GM12878 (cell line): ENCODE measurements at regions of chrX and their contacts with region 1.

Region 1: DNA sequence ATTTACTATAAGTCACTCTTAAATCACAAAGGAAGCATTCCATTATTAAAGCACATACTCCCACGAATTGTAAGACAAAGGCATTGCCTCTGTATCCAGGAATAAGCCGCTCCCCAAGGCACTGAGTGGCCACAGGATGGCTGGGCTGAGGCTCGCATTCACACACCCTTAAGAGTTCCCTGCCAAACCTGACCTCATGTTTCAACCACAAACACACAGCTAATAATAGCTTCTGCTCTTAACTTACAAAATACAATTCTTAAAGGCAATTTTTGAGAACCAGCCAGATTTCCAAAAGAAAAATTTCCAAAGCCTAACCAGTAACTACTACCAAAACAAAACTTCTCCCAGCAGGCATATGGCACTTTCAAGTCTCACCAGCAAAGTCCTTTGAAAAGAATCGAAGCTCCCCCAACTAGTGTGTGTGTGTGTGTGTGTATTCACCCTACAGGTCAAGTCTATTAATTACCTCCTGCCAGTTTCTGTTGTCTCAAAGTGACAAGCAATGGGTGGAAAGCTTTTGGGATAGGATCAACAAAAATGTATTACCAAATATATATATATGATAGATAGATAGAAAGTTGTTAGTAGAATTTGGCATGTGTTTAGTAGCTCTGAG is 36.0 kb downstream of the ARHGAP6 start:
- DNase-seq: no peak
- ATAC-seq: peak; percentile 90
- H3K4me3 ChIP-seq: no peak overlapping the region
- H3K27ac ChIP-seq: no peak overlapping the region
- H3K4me1 ChIP-seq: no peaks in the 10 kb centered on the region
- H3K27me3 ChIP-seq: no peaks in the 10 kb centered on the region; a peak in 1 of 4 replicates
- CTCF ChIP-seq: no peak
- EP300 ChIP-seq: no peak
- POLR2A ChIP-seq: no peak
- RAD21 ChIP-seq: no peak

Region 2: GRCh38 chrX:11611965-11612364 is 17.7 kb before region 1 on chrX:
- CTCF ChIA-PET with region 1: no interaction called
- POLR2A ChIA-PET with region 1: interaction called, 3 read pairs
- RAD21 ChIA-PET with region 1: no interaction called
- SMC1A ChIA-PET with region 1: interaction called, 17 read pairs
- in situ Hi-C with region 1: no loop called
- intact Hi-C with region 1: no loop called
- DNase-seq: no peak
- ATAC-seq: peak; percentile 56
- H3K4me3 ChIP-seq: no peak overlapping the region
- H3K27ac ChIP-seq: no peak overlapping the region
- H3K4me1 ChIP-seq: peaks cover 10% of the 10 kb centered on the region
- H3K27me3 ChIP-seq: no peaks in the 10 kb centered on the region
- CTCF ChIP-seq: no peak
- EP300 ChIP-seq: no peak
- POLR2A ChIP-seq: no peak
- RAD21 ChIP-seq: no peak

Region 3: DNA sequence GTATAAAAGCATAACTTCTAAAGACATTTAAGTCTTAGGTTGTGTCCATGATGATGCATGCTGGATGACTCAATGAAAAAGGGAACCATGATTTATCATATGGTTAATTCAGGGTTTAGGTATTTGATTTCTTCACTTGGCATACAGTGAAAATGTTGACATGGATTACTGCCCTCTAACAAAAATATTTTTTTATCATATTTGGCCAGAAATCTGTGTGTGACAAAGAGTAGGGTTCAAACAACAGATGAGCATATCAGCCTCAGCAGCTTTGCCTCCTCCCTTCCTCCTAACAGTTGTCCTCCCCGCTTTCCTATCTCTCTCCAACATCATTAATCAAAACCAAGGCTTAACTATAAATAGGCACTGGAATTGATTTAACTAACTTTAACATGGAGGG is 10.3 kb before region 1 on chrX:
- CTCF ChIA-PET with region 1: interaction called, 5 read pairs
- POLR2A ChIA-PET with region 1: no interaction called
- RAD21 ChIA-PET with region 1: no interaction called
- SMC1A ChIA-PET with region 1: interaction called, 11 read pairs
- in situ Hi-C with region 1: no loop called
- intact Hi-C with region 1: no loop called
- DNase-seq: no peak
- ATAC-seq: no peak
- H3K4me3 ChIP-seq: no peak overlapping the region
- H3K27ac ChIP-seq: no peak overlapping the region
- H3K4me1 ChIP-seq: no peaks in the 10 kb centered on the region
- H3K27me3 ChIP-seq: no peaks in the 10 kb centered on the region; a peak in 2 of 4 replicates
- CTCF ChIP-seq: no peak
- EP300 ChIP-seq: no peak
- POLR2A ChIP-seq: no peak
- RAD21 ChIP-seq: no peak